ENCODE measurements at regions of chr17 and their contacts with region 1.

Region 1: DNA sequence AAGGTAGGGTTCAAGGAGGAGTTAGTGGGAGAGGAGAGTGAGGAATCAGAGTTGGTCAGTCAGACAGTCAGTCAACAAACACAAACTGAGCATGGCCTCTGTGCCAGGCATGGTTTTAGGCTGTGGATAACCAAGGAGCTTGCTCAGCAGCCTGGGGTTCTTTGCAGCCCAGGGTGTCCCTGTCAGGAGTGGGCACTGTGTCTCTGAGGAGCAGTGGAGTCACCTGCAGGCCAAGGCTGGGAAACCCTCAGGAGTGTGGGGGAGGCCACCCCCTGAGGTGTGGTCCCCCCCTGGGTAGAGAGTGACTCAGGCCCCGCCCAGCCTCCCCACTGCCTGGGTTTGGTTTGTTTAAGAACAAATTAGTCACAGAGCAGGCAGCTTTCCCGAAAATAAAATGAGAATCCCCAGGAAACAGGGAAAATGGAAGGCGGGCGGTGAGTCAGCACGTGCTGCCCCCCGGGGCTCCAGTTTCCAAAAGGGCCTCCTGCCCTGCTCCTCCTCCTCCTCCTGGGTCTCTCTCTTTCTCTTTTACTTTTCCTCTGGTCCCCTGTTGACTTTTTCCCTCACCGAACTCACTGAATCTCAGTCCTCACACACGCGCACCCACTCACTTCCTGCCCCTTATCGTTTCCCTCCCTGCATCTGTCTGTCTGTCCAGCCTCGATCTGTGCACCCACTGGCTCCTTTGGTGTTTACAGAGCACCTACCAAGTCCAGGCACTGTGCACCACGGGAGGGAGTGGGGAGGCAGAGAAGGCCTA is 44.3 kb downstream of the SOCS3 start:
- DNase-seq: no peak
- H3K4me3 Mint-ChIP-seq: peak overlapping the region; percentile 65
- H3K27ac Mint-ChIP-seq: peak overlapping the region; percentile 59
- H3K4me1 Mint-ChIP-seq: peaks cover 37% of the 10 kb centered on the region
- H3K27me3 Mint-ChIP-seq: peaks cover 21% of the 10 kb centered on the region

Region 2: GRCh38 chr17:78289802-78290363 is 25.7 kb before region 1 on chr17:
- intact Hi-C with region 1: no loop called
- DNase-seq: peak; percentile 62
- H3K4me3 Mint-ChIP-seq: no peak overlapping the region
- H3K27ac Mint-ChIP-seq: no peak overlapping the region
- H3K4me1 Mint-ChIP-seq: peaks cover 2% of the 10 kb centered on the region
- H3K27me3 Mint-ChIP-seq: no peaks in the 10 kb centered on the region

Region 3: GRCh38 chr17:78332991-78333390 is 17.5 kb after region 1 on chr17:
- intact Hi-C with region 1: loop called (anchors 2 kb)
- DNase-seq: no peak
- H3K4me3 Mint-ChIP-seq: no peak overlapping the region
- H3K27ac Mint-ChIP-seq: peak overlapping the region; percentile 29
- H3K4me1 Mint-ChIP-seq: peaks cover 26% of the 10 kb centered on the region
- H3K27me3 Mint-ChIP-seq: peaks cover 2% of the 10 kb centered on the region

Measured in activated T-helper 2 cell treated with anti-CD3 and anti-CD28 coated beads, Interferon-gamma antibody, Interleukin-2, Interleukin-4, amounts not matched to agents 10 μg/mL and 5 μg/mL and 100 μg/mL, durations not matched to agents 14 hours and 24 hours and 36 hours (primary cell).